Transverse colon (tissue), 4 donors: ENCODE measurements at regions of chr9 and their contacts with region 1.

Region 1: DNA sequence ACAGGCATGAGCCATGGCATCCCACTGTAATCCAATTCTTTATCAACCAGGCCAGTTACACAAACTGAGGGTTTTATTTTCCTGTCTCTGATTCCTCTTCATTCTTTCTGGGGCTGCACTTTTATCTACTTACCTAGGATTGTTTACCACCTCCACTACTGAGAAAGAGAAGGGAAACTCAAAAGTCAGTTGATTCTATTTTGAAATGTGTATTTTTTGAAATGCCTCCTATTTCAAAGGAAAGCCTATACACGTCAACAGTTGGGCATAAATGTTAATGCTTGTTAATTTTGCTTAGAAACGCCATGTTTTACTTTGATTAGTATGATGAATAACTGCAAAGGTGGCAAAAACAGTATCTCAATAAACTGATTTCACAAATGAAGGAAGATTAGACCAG is 92.5 kb downstream of the MLLT3 start:
- DNase-seq: no peak
- H3K4me3 ChIP-seq: no peak overlapping the region
- H3K27ac ChIP-seq: no peak overlapping the region
- H3K4me1 ChIP-seq: peaks cover 0 to 9% (median 5%) of the 10 kb centered on the region in 4 donors
- H3K27me3 ChIP-seq: no peaks in the 10 kb centered on the region
- CTCF ChIP-seq: no peak
- EP300 ChIP-seq: no peak
- POLR2A ChIP-seq: no peak

Region 2: GRCh38 chr9:20584968-20585643 is 55.3 kb after region 1 on chr9:
- in situ Hi-C with region 1: no loop called
- intact Hi-C with region 1: loop called (anchors 2 kb)
- DNase-seq: no peak
- H3K4me3 ChIP-seq: no peak overlapping the region
- H3K27ac ChIP-seq: no peak overlapping the region
- H3K4me1 ChIP-seq: peaks cover 0 to 26% (median 11%) of the 10 kb centered on the region in 4 donors
- H3K27me3 ChIP-seq: no peaks in the 10 kb centered on the region
- CTCF ChIP-seq: no peak
- EP300 ChIP-seq: no peak
- POLR2A ChIP-seq: no peak